ENCODE measurements at regions of chr17 and their contacts with region 1.

Region 1: DNA sequence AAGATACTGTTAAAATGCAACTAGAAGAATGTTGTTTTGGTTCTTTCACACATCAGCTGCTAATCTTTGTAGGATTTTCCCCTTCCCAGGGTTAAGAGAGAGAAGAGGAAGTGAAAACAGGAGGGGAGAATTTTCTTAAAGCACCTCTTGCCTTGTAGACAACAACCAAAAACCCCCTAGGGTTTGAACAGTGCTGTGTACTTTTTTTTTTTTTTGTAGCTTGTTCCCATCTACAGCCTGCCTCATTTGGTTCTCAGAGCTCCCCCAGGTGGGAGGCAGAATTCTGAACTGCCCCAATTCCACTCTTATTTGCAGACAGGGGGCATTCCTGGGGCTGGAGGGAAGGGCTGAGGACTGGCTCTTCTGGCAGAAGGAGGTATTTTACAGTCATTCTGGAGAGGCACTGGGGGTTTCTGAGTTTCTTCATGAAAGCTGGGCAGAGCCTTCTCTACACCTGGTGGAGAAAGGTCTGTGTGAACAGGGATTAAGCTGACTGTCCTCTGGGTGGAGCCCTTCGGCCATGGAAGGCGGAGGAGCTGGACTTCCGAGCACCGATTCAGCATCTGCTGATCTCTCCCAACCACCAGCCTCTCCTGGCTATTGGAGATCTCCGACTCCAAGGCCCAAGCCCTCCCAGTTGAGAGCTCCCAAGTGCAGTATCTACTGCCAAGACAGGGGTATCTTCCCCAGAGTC is 32.2 kb downstream of the SMARCE1 start:
- DNase-seq: peak in 7 of 9 experiments; percentile 45 to 88 (median 71)
- ATAC-seq: peak; percentile 45
- H3K4me3 ChIP-seq: peak overlapping the region in 1 of 2 experiments; percentile 7
- H3K4me3 Mint-ChIP-seq: peak overlapping the region; percentile 44
- H3K27ac ChIP-seq: peak overlapping the region; percentile 62 to 92
- H3K27ac Mint-ChIP-seq: peak overlapping the region; percentile 97
- H3K4me1 ChIP-seq: peaks cover 76% of the 10 kb centered on the region
- H3K4me1 Mint-ChIP-seq: peaks cover 71% of the 10 kb centered on the region
- H3K27me3 ChIP-seq: no peaks in the 10 kb centered on the region
- H3K27me3 Mint-ChIP-seq: no peaks in the 10 kb centered on the region
- CTCF ChIP-seq: no peak

Region 2: GRCh38 chr17:40542558-40543411 is 72.7 kb before region 1 on chr17:
- CTCF ChIA-PET with region 1: interaction called, 638 read pairs
- POLR2A ChIA-PET with region 1: interaction called, 724 read pairs
- intact Hi-C with region 1: no loop called
- DNase-seq: peak in 6 of 9 experiments; percentile 21 to 75 (median 58)
- ATAC-seq: peak; percentile 3
- H3K4me3 ChIP-seq: no peak overlapping the region
- H3K4me3 Mint-ChIP-seq: peak overlapping the region; percentile 72
- H3K27ac ChIP-seq: peak overlapping the region in 1 of 2 experiments; percentile 66
- H3K27ac Mint-ChIP-seq: peak overlapping the region; percentile 96
- H3K4me1 ChIP-seq: peaks cover 86% of the 10 kb centered on the region
- H3K4me1 Mint-ChIP-seq: peaks cover 88% of the 10 kb centered on the region
- H3K27me3 ChIP-seq: no peaks in the 10 kb centered on the region
- H3K27me3 Mint-ChIP-seq: no peaks in the 10 kb centered on the region
- CTCF ChIP-seq: no peak

Region 3: DNA sequence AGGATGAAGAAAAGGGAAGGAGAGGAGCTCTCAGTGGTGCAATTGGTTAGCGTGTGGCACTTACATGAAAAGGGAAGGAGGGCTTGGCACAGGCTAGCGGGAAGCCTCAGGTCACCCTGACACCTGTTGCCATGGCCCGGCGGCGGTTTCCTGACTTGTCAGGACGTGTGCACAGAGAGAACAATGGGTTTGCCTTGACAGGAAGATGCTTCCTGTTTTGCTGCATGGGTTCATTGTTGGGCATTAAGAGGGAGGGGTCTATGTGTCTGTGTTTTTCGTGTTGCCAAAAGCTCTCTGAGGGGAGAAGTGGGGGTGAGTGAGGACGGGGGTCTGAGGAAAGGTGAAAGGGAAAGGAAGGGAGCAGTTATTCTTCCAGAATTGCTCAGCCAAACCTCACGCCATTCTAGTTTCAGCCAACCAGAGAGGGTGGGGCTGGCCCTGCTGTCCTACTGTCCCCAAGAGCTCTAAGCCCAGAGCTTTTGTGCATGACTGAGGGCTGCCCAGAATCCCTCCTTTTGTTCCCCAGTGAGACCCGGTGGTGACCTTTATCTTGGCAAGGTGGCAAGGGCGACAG is 33.0 kb before region 1 on chr17:
- CTCF ChIA-PET with region 1: interaction called, 17 read pairs
- POLR2A ChIA-PET with region 1: interaction called, 6 read pairs
- intact Hi-C with region 1: loop called in 1 of 2 experiments (anchors 1 kb)
- DNase-seq: peak; percentile 48 to 90 (median 77)
- ATAC-seq: peak; percentile 85
- H3K4me3 ChIP-seq: peak overlapping the region; percentile 15 to 17
- H3K4me3 Mint-ChIP-seq: peak overlapping the region; percentile 79
- H3K27ac ChIP-seq: peak overlapping the region; percentile 60 to 74
- H3K27ac Mint-ChIP-seq: peak overlapping the region; percentile 94
- H3K4me1 ChIP-seq: peaks cover 86% of the 10 kb centered on the region
- H3K4me1 Mint-ChIP-seq: peaks cover 95% of the 10 kb centered on the region
- H3K27me3 ChIP-seq: no peaks in the 10 kb centered on the region
- H3K27me3 Mint-ChIP-seq: no peaks in the 10 kb centered on the region
- CTCF ChIP-seq: no peak

Region 4: GRCh38 chr17:40686898-40687833 is 71.7 kb after region 1 on chr17:
- CTCF ChIA-PET with region 1: no interaction called
- POLR2A ChIA-PET with region 1: no interaction called
- intact Hi-C with region 1: no loop called
- DNase-seq: no peak
- ATAC-seq: no peak
- H3K4me3 ChIP-seq: no peak overlapping the region
- H3K4me3 Mint-ChIP-seq: no peak overlapping the region
- H3K27ac ChIP-seq: no peak overlapping the region
- H3K27ac Mint-ChIP-seq: no peak overlapping the region
- H3K4me1 ChIP-seq: no peaks in the 10 kb centered on the region
- H3K4me1 Mint-ChIP-seq: no peaks in the 10 kb centered on the region
- H3K27me3 ChIP-seq: no peaks in the 10 kb centered on the region
- H3K27me3 Mint-ChIP-seq: peaks cover 10% of the 10 kb centered on the region
- CTCF ChIP-seq: no peak

Region 5: GRCh38 chr17:40726919-40727318 is 111.5 kb after region 1 on chr17:
- CTCF ChIA-PET with region 1: interaction called, 10 read pairs
- POLR2A ChIA-PET with region 1: no interaction called
- intact Hi-C with region 1: loop called in 1 of 2 experiments (anchors 1 kb)
- DNase-seq: peak in 2 of 9 experiments; percentile 18 to 46
- ATAC-seq: peak; percentile 29
- H3K4me3 ChIP-seq: no peak overlapping the region
- H3K4me3 Mint-ChIP-seq: no peak overlapping the region
- H3K27ac ChIP-seq: no peak overlapping the region
- H3K27ac Mint-ChIP-seq: no peak overlapping the region
- H3K4me1 ChIP-seq: no peaks in the 10 kb centered on the region
- H3K4me1 Mint-ChIP-seq: no peaks in the 10 kb centered on the region
- H3K27me3 ChIP-seq: peaks cover 0 to 2% of the 10 kb centered on the region in 2 experiments
- H3K27me3 Mint-ChIP-seq: peaks cover 25% of the 10 kb centered on the region
- CTCF ChIP-seq: peak; percentile 56

Measured in CD8-positive, alpha-beta T cell (primary cell).